CD4-positive, alpha-beta memory T cell (primary cell): ENCODE measurements at regions of chr6 and their contacts with region 1.

Region 1: DNA sequence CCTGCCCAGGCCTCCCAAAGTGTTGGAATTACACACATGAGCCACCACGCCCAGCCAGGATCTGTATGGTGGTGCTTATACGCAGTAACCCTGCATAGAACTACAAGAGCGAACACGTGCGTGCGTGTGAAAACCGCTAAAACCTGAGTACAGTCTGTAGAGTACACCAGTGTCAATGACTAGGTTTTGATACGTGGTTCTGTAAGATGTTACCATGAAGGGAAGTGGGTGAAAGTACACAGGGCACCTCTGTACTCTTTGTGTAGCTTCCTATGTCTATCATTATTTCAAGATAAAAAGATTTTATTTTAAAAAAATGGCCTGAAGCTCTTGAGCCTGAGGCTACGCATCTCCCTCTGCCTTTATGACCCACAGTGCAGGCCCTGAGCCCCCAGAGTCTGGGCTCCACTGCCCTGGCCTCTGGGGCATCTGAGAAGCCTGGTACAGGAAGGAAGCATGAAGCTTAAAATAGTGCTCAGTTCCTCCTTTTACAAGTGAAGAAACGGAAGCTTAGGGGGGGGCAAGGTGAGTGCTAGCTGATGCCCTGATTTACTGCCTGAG is 21.6 kb downstream of the LY86 start:
- DNase-seq: peak; percentile 61 to 72 (median 64)
- H3K4me3 ChIP-seq: no peak overlapping the region
- H3K4me3 Mint-ChIP-seq: peak overlapping the region in 7 of 8 donors; percentile 53 to 73 (median 61)
- H3K27ac ChIP-seq: peak overlapping the region; percentile 15
- H3K27ac Mint-ChIP-seq: peak overlapping the region; percentile 81 to 98 (median 95)
- H3K4me1 ChIP-seq: peaks cover 67% of the 10 kb centered on the region
- H3K4me1 Mint-ChIP-seq: peaks cover 42 to 74% (median 57%) of the 10 kb centered on the region in 4 donors
- H3K27me3 ChIP-seq: no peaks in the 10 kb centered on the region
- H3K27me3 Mint-ChIP-seq: no peaks in the 10 kb centered on the region

Region 2: DNA sequence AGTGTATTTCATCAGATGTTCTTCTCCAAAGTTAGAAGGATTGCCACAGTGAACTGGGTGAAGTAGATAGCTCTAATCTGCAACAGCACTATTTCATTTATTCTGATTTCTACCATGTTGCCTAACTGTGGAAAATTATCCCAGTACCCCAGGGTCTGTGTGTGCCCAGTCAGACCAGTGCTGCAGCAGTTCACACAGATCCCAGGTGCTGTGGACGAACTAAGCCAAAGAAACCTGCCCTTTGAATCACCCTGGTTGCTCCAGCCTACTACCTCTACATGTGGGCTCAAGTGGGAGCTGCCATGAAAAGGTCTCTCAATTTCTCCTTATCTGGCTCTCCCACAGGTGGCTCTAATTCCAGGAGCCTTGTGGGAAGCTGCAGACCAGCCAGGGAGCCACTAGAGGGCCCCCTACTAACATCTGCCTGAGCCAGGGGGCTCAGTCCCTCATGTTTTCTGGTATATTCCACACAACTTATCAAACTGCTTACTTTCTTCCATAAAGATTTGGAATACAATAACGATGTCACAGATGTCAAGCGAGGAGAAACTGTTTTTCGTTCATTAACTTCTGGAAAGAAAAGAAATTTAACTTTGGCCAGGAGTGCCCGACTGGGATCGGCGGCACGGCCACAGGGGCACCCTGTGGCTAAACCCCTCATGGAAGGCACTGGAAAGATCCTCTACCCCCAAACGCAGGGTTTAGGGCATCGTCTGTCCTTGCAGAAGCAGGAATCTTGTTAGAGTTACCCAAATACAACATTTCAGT is 53.2 kb before region 1 on chr6:
- CTCF ChIA-PET with region 1: interaction called, 37 read pairs
- POLR2A ChIA-PET with region 1: interaction called, 3 read pairs
- intact Hi-C with region 1: loop called (anchors 1 kb)
- DNase-seq: peak; percentile 26 to 53 (median 44)
- H3K4me3 ChIP-seq: no peak overlapping the region
- H3K4me3 Mint-ChIP-seq: no peak overlapping the region
- H3K27ac ChIP-seq: no peak overlapping the region
- H3K27ac Mint-ChIP-seq: peak overlapping the region in 3 of 7 donors; percentile 26 to 67 (median 34)
- H3K4me1 ChIP-seq: no peaks in the 10 kb centered on the region
- H3K4me1 Mint-ChIP-seq: peaks cover 1 to 6% (median 4%) of the 10 kb centered on the region in 4 donors
- H3K27me3 ChIP-seq: no peaks in the 10 kb centered on the region
- H3K27me3 Mint-ChIP-seq: peaks cover 1 to 4% of the 10 kb centered on the region in 2 donors

Region 3: DNA sequence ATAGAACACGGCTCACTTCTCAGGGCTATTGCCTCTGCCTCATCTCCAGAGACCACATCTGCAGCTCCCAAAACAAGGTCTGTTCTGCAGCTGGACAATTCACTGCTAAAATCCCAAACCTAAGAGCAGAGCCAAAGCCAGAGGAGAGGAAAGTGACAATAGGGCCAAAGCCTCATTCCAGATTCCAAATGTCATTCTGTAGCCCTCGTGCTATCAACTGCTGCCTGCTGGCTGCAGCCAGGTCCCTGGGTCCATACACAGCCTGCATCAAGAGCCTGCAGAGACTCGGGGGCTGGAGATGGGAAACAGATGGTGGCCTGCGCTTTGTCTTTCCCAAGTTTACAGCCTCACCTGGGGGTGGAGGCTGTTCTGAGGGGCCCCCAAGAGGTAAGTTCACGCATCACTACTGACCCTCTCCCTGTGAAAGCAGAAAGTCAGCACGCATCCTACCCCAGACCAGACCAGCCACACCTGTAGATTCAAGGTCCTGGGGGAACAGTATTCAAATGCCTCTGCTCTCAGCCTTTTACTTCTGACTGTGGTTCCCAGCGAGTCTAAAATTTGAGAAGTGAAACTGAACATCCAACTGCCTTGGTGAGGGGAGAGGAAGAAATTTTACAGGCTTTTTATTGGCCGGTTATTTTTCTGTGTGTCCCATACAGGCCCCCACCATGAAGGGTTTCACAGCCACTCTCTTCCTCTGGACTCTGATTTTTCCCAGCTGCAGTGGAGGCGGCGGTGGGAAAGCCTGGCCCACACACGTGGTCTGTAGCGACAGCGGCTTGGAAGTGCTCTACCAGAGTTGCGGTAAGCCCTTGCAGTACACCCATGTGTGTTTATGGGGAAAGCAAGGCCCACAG is 21.8 kb before region 1 on chr6 and contains the start of gene LY86:
- CTCF ChIA-PET with region 1: interaction called, 3 read pairs
- POLR2A ChIA-PET with region 1: interaction called, 18 read pairs
- intact Hi-C with region 1: loop called (anchors 1 kb)
- DNase-seq: no peak
- H3K4me3 ChIP-seq: no peak within 1 kb of the TSS
- H3K4me3 Mint-ChIP-seq: peak within 1 kb of the TSS in 7 of 8 donors; percentile 49 to 81 (median 66)
- H3K27ac ChIP-seq: no peak within 1 kb of the TSS
- H3K27ac Mint-ChIP-seq: peak within 1 kb of the TSS in 6 of 7 donors; percentile 19 to 90 (median 60)
- H3K4me1 ChIP-seq: peaks cover 22% of the 10 kb centered on the region
- H3K4me1 Mint-ChIP-seq: peaks cover 25 to 60% (median 39%) of the 10 kb centered on the region in 4 donors
- H3K27me3 ChIP-seq: no peaks in the 10 kb centered on the region
- H3K27me3 Mint-ChIP-seq: peaks cover 0 to 4% of the 10 kb centered on the region in 2 donors
- total RNA-seq, gene LY86: 1.0 to 1.5 TPM

Region 4: GRCh38 chr6:6596529-6597314 is 13.4 kb before region 1 on chr6:
- CTCF ChIA-PET with region 1: interaction called, 3 read pairs
- POLR2A ChIA-PET with region 1: interaction called, 18 read pairs
- intact Hi-C with region 1: loop called (anchors 1 kb)
- DNase-seq: peak in 3 of 5 donors; percentile 29 to 40 (median 30)
- H3K4me3 ChIP-seq: no peak overlapping the region
- H3K4me3 Mint-ChIP-seq: peak overlapping the region in 2 of 8 donors; percentile 3 to 40
- H3K27ac ChIP-seq: no peak overlapping the region
- H3K27ac Mint-ChIP-seq: peak overlapping the region; percentile 10 to 67 (median 31)
- H3K4me1 ChIP-seq: peaks cover 31% of the 10 kb centered on the region
- H3K4me1 Mint-ChIP-seq: peaks cover 22 to 45% (median 32%) of the 10 kb centered on the region in 4 donors
- H3K27me3 ChIP-seq: no peaks in the 10 kb centered on the region
- H3K27me3 Mint-ChIP-seq: peaks cover 0 to 4% of the 10 kb centered on the region in 2 donors

Region 5: DNA sequence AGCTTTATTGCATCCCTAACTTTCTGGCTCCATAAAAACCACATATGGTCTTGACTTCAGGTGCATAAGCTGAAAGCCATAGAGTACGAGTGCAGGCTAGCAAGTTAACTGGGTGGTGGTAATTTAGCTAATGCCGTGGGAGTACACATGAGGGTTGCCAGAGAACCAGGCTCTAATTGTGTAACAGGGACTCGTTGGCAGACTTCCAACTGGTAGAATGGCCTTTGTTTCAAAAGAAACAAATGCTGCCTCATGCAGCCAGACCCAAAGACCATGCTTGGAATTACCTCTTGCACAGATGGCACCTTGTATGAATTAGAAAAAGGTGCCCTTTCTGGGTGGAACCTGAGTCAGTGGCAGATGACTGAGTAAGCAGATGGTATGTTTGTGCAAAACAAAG is 51.6 kb after region 1 on chr6:
- CTCF ChIA-PET with region 1: no interaction called
- POLR2A ChIA-PET with region 1: interaction called, 11 read pairs
- intact Hi-C with region 1: loop called (anchors 1 kb)
- DNase-seq: no peak
- H3K4me3 ChIP-seq: no peak overlapping the region
- H3K4me3 Mint-ChIP-seq: no peak overlapping the region
- H3K27ac ChIP-seq: no peak overlapping the region
- H3K27ac Mint-ChIP-seq: no peak overlapping the region
- H3K4me1 ChIP-seq: peaks cover 24% of the 10 kb centered on the region
- H3K4me1 Mint-ChIP-seq: peaks cover 0 to 38% (median 27%) of the 10 kb centered on the region in 4 donors
- H3K27me3 ChIP-seq: no peaks in the 10 kb centered on the region
- H3K27me3 Mint-ChIP-seq: peaks cover 3 to 7% of the 10 kb centered on the region in 2 donors

Region 6: GRCh38 chr6:6724539-6725467 is 114.7 kb after region 1 on chr6:
- CTCF ChIA-PET with region 1: no interaction called
- POLR2A ChIA-PET with region 1: no interaction called
- intact Hi-C with region 1: no loop called
- DNase-seq: peak in 4 of 5 donors; percentile 23 to 37 (median 26)
- H3K4me3 ChIP-seq: no peak overlapping the region
- H3K4me3 Mint-ChIP-seq: peak overlapping the region; percentile 22 to 79 (median 61)
- H3K27ac ChIP-seq: no peak overlapping the region
- H3K27ac Mint-ChIP-seq: peak overlapping the region in 2 of 7 donors; percentile 42 to 60
- H3K4me1 ChIP-seq: no peaks in the 10 kb centered on the region
- H3K4me1 Mint-ChIP-seq: peaks cover 3 to 16% (median 7%) of the 10 kb centered on the region in 4 donors
- H3K27me3 ChIP-seq: no peaks in the 10 kb centered on the region
- H3K27me3 Mint-ChIP-seq: peaks cover 9 to 16% of the 10 kb centered on the region in 2 donors